ENCODE measurements at regions of chr17 and their contacts with region 1.

Region 1: DNA sequence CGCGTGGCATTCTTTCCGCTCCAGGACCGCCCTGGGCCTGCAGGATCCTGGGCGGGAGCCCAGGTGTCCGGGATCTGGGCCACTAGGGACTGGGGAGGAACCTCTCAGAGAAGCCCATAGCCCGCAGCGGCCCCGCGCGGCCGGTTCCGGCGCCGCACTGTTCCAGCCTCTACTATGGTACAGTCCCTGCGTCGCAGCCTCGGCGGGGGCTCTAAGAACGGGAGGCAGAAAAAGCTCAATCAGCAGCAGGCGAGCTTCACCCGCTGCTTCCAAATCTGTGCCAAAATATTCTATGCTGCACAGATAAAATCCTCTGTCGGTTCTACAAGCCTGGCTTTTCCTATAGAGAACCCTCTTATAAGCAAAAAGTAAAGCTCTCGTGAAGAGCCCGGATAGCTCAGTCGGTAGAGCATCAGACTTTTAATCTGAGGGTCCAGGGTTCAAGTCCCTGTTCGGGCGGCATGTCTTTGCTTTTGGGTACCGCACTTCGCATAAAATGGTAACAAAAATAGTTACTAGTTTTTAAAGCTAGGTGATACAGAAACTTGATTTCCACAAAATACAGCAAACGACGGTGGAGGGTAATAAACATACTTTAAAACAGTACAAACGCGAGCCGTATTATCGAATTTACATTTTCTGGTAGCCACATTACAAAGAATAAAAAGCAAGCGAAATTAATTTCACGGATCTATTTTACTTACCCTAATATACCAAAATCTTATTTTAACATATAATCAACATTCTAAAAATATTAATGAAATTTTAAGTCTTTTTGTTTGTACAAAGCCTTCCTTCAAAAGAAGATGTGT is 661 bp upstream of the ALOXE3 start:
- DNase-seq: peak; percentile 77 to 91 (median 84)
- H3K4me3 ChIP-seq: peak overlapping the region; percentile 99
- H3K4me3 Mint-ChIP-seq: peak overlapping the region; percentile 84 to 98 (median 94)
- H3K27ac ChIP-seq: peak overlapping the region; percentile 41
- H3K27ac Mint-ChIP-seq: peak overlapping the region; percentile 77 to 100 (median 94)
- H3K4me1 ChIP-seq: peaks cover 50% of the 10 kb centered on the region
- H3K4me1 Mint-ChIP-seq: peaks cover 46 to 61% (median 60%) of the 10 kb centered on the region in 3 donors
- H3K27me3 ChIP-seq: peaks cover 27% of the 10 kb centered on the region
- H3K27me3 Mint-ChIP-seq: peaks cover 46 to 55% of the 10 kb centered on the region in 2 donors

Region 2: GRCh38 chr17:8073627-8074484 is 45.1 kb before region 1 on chr17:
- CTCF ChIA-PET with region 1: interaction called, 22 read pairs
- POLR2A ChIA-PET with region 1: no interaction called
- DNase-seq: peak; percentile 70 to 85 (median 80)
- H3K4me3 ChIP-seq: peak overlapping the region; percentile 51
- H3K4me3 Mint-ChIP-seq: peak overlapping the region; percentile 16 to 86 (median 81)
- H3K27ac ChIP-seq: no peak overlapping the region
- H3K27ac Mint-ChIP-seq: peak overlapping the region in 5 of 8 donors; percentile 47 to 91 (median 78)
- H3K4me1 ChIP-seq: peaks cover 25% of the 10 kb centered on the region
- H3K4me1 Mint-ChIP-seq: peaks cover 16 to 25% (median 19%) of the 10 kb centered on the region in 3 donors
- H3K27me3 ChIP-seq: peaks cover 17% of the 10 kb centered on the region
- H3K27me3 Mint-ChIP-seq: peaks cover 36 to 47% of the 10 kb centered on the region in 2 donors

Region 3: DNA sequence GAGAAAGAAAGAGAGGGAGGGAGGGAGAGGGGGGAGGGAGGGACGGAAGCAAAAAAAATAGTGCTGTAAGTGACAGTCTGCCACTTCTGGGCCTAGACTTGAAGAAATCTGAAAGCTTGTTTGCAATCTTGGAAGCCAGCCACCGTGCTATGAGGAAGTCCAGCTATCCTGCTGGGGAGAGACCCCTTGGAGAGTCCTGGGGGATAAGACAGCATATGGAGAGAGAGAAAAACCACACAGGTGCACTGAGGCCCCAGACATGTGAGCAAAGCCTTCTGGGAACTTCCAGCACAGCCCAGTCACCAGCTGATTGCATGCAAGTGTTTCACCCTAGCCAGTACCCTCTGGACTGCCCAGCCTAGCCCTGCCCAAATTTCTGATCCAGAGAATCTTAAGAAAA is 18.9 kb before region 1 on chr17:
- CTCF ChIA-PET with region 1: interaction called, 11 read pairs
- POLR2A ChIA-PET with region 1: interaction called, 3 read pairs
- DNase-seq: no peak
- H3K4me3 ChIP-seq: no peak overlapping the region
- H3K4me3 Mint-ChIP-seq: no peak overlapping the region
- H3K27ac ChIP-seq: no peak overlapping the region
- H3K27ac Mint-ChIP-seq: no peak overlapping the region
- H3K4me1 ChIP-seq: no peaks in the 10 kb centered on the region
- H3K4me1 Mint-ChIP-seq: no peaks in the 10 kb centered on the region
- H3K27me3 ChIP-seq: no peaks in the 10 kb centered on the region
- H3K27me3 Mint-ChIP-seq: peaks cover 1 to 9% of the 10 kb centered on the region in 2 donors

Region 4: DNA sequence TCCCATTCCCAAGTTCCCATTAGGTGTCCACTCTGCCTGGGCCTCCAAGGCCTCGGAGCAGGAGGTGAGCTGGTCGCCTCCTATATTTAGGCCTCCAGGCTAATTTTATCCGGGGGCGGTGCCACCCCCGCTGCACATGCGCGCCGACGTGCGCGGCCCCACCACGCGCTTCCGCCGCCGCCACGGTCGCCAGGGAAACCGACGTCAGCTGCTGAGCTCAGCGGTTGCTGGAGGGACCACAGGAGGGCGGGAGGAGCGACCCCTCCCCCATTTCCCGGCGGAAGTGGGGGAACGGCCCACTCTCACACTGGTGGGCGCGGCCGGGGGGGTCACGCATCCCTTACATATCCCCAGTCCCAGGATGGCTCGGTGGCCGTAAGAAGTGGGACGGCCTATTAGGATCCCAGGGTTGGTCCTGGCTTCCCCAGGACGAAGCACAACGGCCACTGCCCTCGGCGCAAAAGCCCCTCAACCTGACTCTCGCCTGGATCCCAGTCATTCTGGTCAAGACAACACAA is 32.2 kb after region 1 on chr17:
- CTCF ChIA-PET with region 1: interaction called, 23 read pairs
- POLR2A ChIA-PET with region 1: interaction called, 19 read pairs
- DNase-seq: peak; percentile 87 to 97 (median 95)
- H3K4me3 ChIP-seq: peak overlapping the region; percentile 60
- H3K4me3 Mint-ChIP-seq: peak overlapping the region in 4 of 7 donors; percentile 57 to 98 (median 95)
- H3K27ac ChIP-seq: peak overlapping the region; percentile 100
- H3K27ac Mint-ChIP-seq: peak overlapping the region in 3 of 8 donors; percentile 87 to 99 (median 91)
- H3K4me1 ChIP-seq: peaks cover 55% of the 10 kb centered on the region
- H3K4me1 Mint-ChIP-seq: peaks cover 19 to 68% (median 33%) of the 10 kb centered on the region in 3 donors
- H3K27me3 ChIP-seq: no peaks in the 10 kb centered on the region
- H3K27me3 Mint-ChIP-seq: peaks cover 0 to 20% of the 10 kb centered on the region in 2 donors

Region 5: GRCh38 chr17:8189711-8190477 is 70.9 kb after region 1 on chr17 and contains the start of gene BORCS6:
- CTCF ChIA-PET with region 1: interaction called, 36 read pairs
- POLR2A ChIA-PET with region 1: interaction called, 9 read pairs
- DNase-seq: peak; percentile 93 to 97 (median 95)
- H3K4me3 ChIP-seq: peak within 1 kb of the TSS; percentile 92
- H3K4me3 Mint-ChIP-seq: peak within 1 kb of the TSS in 1 of 7 donors; percentile 15
- H3K27ac ChIP-seq: peak within 1 kb of the TSS; percentile 81
- H3K27ac Mint-ChIP-seq: peak within 1 kb of the TSS; percentile 46 to 95 (median 88)
- H3K4me1 ChIP-seq: peaks cover 39% of the 10 kb centered on the region
- H3K4me1 Mint-ChIP-seq: peaks cover 12 to 13% (median 12%) of the 10 kb centered on the region in 3 donors
- H3K27me3 ChIP-seq: no peaks in the 10 kb centered on the region
- H3K27me3 Mint-ChIP-seq: peaks cover 0 to 2% of the 10 kb centered on the region in 2 donors
- total RNA-seq, gene BORCS6: 8.1 to 8.8 TPM

Region 6: DNA sequence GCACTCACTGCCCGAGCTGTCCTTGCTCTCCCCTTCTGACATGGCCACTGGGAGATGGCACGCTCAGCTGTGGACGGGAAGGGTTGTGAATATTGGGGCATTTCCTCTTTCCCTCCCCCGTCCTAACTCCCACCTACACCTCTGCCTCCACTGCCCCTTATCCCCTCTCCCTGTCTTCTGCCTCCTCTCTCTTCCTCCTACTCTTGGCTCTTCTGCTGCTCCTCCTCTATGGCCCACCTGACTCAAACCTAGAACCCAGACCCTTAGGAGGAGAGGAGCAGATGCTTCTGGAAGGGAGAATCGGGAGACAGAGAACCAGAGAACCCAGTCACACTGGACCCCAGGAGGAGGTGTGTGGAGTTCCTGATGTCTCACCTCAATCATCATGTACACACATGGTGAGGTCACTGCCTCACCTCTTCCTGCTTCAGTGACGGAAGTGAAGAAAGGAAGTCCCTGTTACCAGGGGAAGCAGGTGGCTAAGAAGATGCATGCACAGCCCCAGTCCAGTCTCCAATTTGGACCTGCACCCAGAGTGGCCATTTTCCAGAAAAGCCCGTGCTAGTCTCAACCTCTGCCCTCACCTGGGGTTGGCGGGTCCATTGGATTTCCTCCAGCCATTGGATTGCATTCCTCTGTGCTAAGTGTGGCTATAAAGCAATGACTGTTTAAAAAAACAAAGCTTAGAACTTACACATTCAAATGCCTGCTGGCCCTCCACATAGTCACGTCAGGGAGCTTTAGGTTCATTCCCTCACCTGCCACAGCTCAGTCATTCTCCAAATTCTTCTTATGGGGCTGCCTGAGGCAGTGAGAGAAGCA is 274.7 kb after region 1 on chr17:
- CTCF ChIA-PET with region 1: no interaction called
- POLR2A ChIA-PET with region 1: no interaction called
- DNase-seq: peak in 4 of 5 donors; percentile 33 to 69 (median 58)
- H3K4me3 ChIP-seq: no peak overlapping the region
- H3K4me3 Mint-ChIP-seq: peak overlapping the region in 5 of 7 donors; percentile 34 to 83 (median 64)
- H3K27ac ChIP-seq: peak overlapping the region; percentile 13
- H3K27ac Mint-ChIP-seq: peak overlapping the region; percentile 71 to 100 (median 93)
- H3K4me1 ChIP-seq: peaks cover 15% of the 10 kb centered on the region
- H3K4me1 Mint-ChIP-seq: peaks cover 15 to 27% (median 20%) of the 10 kb centered on the region in 3 donors
- H3K27me3 ChIP-seq: peaks cover 5% of the 10 kb centered on the region
- H3K27me3 Mint-ChIP-seq: peaks cover 8 to 15% of the 10 kb centered on the region in 2 donors

Measured in CD8-positive, alpha-beta memory T cell (primary cell).